IMR-90 (cell line): ENCODE measurements at regions of chr17 and their contacts with region 1.

Region 1: GRCh38 chr17:56136301-56136700 is 17.0 kb upstream of the ANKFN1 start:
- DNase-seq: no peak
- ATAC-seq: no peak
- H3K4me3 ChIP-seq: no peak overlapping the region
- H3K27ac ChIP-seq: no peak overlapping the region
- H3K4me1 ChIP-seq: peaks cover 3% of the 10 kb centered on the region; the same call in 1 of the 2 replicates
- H3K27me3 ChIP-seq: no peaks in the 10 kb centered on the region
- CTCF ChIP-seq: no peak
- POLR2A ChIP-seq: no peak
- RAD21 ChIP-seq: no peak

Region 2: DNA sequence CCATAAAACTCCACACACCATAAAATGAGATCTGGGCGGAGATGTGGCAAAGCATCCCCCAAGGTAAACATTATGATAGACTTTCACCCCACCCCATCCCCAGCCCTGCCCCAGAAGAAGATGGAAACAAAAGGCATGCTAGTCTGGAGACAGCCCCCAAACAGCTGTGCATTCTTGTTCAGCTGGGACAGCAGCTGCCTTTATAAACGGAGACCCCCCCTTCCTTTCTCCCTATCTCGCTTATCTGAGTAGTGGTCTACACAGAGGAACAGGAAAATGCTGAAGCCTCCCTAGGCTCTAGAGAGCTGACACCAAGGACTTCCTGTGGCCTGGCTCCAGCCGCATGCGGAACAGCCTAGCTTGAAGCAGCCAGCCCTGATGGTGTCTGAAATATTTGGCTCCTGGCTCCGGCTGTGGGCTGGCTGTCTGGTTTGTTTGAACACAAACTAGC is 173.3 kb before region 1 on chr17:
- CTCF ChIA-PET with region 1: no interaction called
- POLR2A ChIA-PET with region 1: no interaction called
- dilution Hi-C with region 1: no loop called
- in situ Hi-C with region 1: no loop called
- intact Hi-C with region 1: no loop called
- DNase-seq: no peak
- ATAC-seq: no peak
- H3K4me3 ChIP-seq: no peak overlapping the region
- H3K27ac ChIP-seq: no peak overlapping the region
- H3K4me1 ChIP-seq: no peaks in the 10 kb centered on the region
- H3K27me3 ChIP-seq: no peaks in the 10 kb centered on the region
- CTCF ChIP-seq: no peak
- POLR2A ChIP-seq: no peak
- RAD21 ChIP-seq: no peak

Region 3: DNA sequence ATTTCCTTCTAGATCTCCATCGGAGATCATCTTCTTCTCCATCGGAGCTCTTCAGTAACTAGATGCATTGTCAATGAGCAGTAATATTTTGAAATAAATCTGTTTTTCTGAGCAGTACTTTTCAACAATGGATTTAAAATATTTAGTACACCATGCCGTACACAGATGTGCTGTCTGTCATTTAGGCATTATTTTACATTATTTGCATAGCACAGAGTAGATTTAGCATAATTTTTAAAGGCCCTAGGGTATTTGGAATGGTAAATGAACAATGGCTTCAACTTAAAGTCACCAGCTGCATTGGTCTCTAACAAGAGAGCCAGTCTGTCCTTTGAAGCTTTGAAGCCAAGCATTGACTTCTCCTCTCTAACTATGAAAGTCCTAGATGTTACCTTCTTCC is 78.4 kb before region 1 on chr17:
- CTCF ChIA-PET with region 1: no interaction called
- POLR2A ChIA-PET with region 1: no interaction called
- dilution Hi-C with region 1: no loop called
- in situ Hi-C with region 1: no loop called
- intact Hi-C with region 1: no loop called
- DNase-seq: no peak
- ATAC-seq: no peak
- H3K4me3 ChIP-seq: no peak overlapping the region
- H3K27ac ChIP-seq: no peak overlapping the region
- H3K4me1 ChIP-seq: no peaks in the 10 kb centered on the region
- H3K27me3 ChIP-seq: no peaks in the 10 kb centered on the region
- CTCF ChIP-seq: no peak
- POLR2A ChIP-seq: no peak
- RAD21 ChIP-seq: no peak

Region 4: DNA sequence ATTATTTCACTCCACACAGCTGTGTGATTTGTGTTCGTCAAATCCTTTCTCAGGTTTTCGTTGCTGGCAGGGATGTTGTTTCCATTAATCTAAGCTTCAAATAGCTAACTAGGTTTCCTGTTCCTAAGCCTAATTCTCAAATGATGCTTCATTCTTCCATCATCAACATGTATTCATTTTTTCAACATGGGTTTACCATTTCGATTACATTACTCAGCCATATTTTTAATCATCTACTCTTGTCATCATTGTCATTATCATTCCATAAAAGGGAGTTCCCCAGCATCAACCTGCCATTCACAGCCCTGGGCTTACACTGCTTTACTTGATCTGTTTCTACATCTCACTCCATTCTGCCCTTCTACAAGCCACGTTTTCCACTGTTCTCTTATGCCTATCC is 16.4 kb before region 1 on chr17:
- CTCF ChIA-PET with region 1: no interaction called
- POLR2A ChIA-PET with region 1: no interaction called
- dilution Hi-C with region 1: no loop called
- in situ Hi-C with region 1: no loop called
- intact Hi-C with region 1: loop called (anchors 1 kb)
- DNase-seq: no peak
- ATAC-seq: no peak
- H3K4me3 ChIP-seq: no peak overlapping the region
- H3K27ac ChIP-seq: no peak overlapping the region
- H3K4me1 ChIP-seq: no peaks in the 10 kb centered on the region
- H3K27me3 ChIP-seq: no peaks in the 10 kb centered on the region
- CTCF ChIP-seq: no peak
- POLR2A ChIP-seq: no peak
- RAD21 ChIP-seq: no peak

Region 5: DNA sequence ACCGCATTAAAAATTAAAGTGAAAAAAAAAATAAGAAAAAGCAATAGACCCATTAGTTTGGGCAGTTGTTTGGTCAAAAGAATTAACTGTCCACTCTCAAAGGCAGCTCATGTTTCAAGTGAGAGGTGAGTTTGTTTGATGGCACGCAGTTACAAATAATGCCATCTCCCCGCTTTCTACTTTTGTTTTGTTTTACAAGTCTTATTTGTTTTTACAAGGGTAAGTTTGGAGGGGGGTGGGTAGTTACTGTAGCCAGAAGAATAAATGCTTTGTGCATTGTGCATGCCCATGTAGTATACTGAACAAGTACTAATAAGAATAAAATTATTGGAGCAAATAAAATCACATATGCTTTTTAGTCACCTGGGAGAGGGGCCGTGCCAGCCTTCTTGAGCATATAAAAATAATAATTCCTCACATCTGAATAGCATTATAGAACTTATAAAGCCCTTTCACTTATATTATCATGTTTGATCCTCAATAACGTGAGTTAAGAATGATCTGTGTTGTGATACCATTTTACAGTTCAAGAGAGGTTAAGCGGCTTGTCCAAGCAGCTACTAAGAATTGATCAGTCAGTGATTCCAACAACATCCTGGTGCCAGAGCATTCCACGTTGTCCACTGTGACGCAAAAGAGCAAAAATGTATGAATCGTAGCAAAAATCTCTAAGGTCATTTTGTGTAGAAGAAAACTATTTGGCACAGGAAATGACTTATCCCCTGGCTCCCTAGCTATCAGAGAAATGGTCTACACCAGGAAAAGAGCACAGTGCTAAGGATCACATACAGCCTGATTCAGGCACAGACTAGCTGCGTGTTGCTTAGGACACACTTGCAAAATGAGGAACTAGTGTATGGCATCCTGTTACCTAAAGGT is 49.8 kb after region 1 on chr17:
- CTCF ChIA-PET with region 1: no interaction called
- POLR2A ChIA-PET with region 1: no interaction called
- dilution Hi-C with region 1: no loop called
- in situ Hi-C with region 1: no loop called
- intact Hi-C with region 1: no loop called
- DNase-seq: peak; percentile 94
- ATAC-seq: peak; percentile 92
- H3K4me3 ChIP-seq: no peak overlapping the region
- H3K27ac ChIP-seq: peak overlapping the region; percentile 80
- H3K4me1 ChIP-seq: peaks cover 4% of the 10 kb centered on the region; the same call in 1 of the 2 replicates
- H3K27me3 ChIP-seq: no peaks in the 10 kb centered on the region
- CTCF ChIP-seq: no peak
- POLR2A ChIP-seq: peak; percentile 27; the same call in 1 of the 2 replicates
- RAD21 ChIP-seq: no peak